Caco-2 (cell line): ENCODE measurements at regions of chr10 and their contacts with region 1.

Region 1: GRCh38 chr10:114703377-114704107 is 45.5 kb upstream of the ABLIM1 start:
- DNase-seq: peak in 1 of 2 experiments; percentile 40
- H3K4me3 ChIP-seq: no peak overlapping the region
- H3K4me3 Mint-ChIP-seq: no peak overlapping the region
- H3K27ac Mint-ChIP-seq: no peak overlapping the region
- H3K4me1 ChIP-seq: no peaks in the 10 kb centered on the region
- H3K4me1 Mint-ChIP-seq: no peaks in the 10 kb centered on the region
- H3K27me3 ChIP-seq: no peaks in the 10 kb centered on the region
- H3K27me3 Mint-ChIP-seq: no peaks in the 10 kb centered on the region
- CTCF ChIP-seq: peak; percentile 73 to 83

Region 2: DNA sequence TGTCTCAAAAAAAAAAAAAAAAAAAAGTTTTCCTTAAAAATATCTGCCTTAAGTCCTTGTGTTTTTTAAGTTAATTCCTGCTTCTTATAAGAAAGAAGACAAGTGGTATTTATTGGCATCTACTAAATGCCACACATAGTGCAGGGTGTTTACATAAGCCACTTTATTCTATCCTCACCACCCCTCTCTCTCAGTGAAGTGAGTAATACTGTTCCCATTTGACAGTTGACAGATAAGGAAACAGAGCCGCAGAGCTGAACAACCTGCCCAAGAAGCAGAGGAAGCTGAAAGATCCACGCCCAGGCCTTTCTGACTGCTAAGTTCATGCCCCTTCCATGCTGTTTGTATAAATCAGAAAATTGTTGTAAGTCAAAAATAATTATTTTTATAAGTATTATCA is 99.6 kb before region 1 on chr10:
- CTCF ChIA-PET with region 1: no interaction called
- POLR2A ChIA-PET with region 1: no interaction called
- intact Hi-C with region 1: no loop called
- DNase-seq: no peak
- H3K4me3 ChIP-seq: no peak overlapping the region
- H3K4me3 Mint-ChIP-seq: no peak overlapping the region
- H3K27ac Mint-ChIP-seq: peak overlapping the region; percentile 39
- H3K4me1 ChIP-seq: peaks cover 43% of the 10 kb centered on the region
- H3K4me1 Mint-ChIP-seq: peaks cover 37% of the 10 kb centered on the region
- H3K27me3 ChIP-seq: no peaks in the 10 kb centered on the region
- H3K27me3 Mint-ChIP-seq: no peaks in the 10 kb centered on the region
- CTCF ChIP-seq: no peak

Region 3: GRCh38 chr10:114783686-114784085 is 80.1 kb after region 1 on chr10:
- CTCF ChIA-PET with region 1: interaction called, 4 read pairs
- POLR2A ChIA-PET with region 1: no interaction called
- intact Hi-C with region 1: loop called (anchors 1 kb)
- DNase-seq: no peak
- H3K4me3 ChIP-seq: no peak overlapping the region
- H3K4me3 Mint-ChIP-seq: no peak overlapping the region
- H3K27ac Mint-ChIP-seq: no peak overlapping the region
- H3K4me1 ChIP-seq: no peaks in the 10 kb centered on the region
- H3K4me1 Mint-ChIP-seq: no peaks in the 10 kb centered on the region
- H3K27me3 ChIP-seq: no peaks in the 10 kb centered on the region
- H3K27me3 Mint-ChIP-seq: peaks cover 2% of the 10 kb centered on the region
- CTCF ChIP-seq: no peak

Region 4: DNA sequence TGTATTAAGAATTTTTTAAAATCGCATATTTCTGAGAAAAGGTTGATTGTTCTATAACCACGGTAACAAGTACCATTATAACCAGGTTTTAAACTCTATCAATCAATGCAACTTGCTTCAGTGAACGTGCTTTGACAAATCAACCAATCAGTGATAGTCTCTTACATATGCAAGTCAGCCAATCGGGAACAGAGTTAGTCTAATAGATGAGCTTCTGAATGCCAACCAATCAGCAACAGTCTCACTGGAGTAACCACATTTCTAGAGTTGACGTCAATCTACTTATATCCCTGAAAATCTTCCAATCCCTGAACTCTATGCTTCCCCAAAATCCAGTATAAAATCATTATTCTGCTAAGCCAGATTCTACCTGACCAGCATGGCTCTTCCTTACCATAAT is 189.7 kb after region 1 on chr10:
- CTCF ChIA-PET with region 1: no interaction called
- POLR2A ChIA-PET with region 1: no interaction called
- intact Hi-C with region 1: no loop called
- DNase-seq: no peak
- H3K4me3 ChIP-seq: no peak overlapping the region
- H3K4me3 Mint-ChIP-seq: peak overlapping the region; percentile 12
- H3K27ac Mint-ChIP-seq: no peak overlapping the region
- H3K4me1 ChIP-seq: no peaks in the 10 kb centered on the region
- H3K4me1 Mint-ChIP-seq: no peaks in the 10 kb centered on the region
- H3K27me3 ChIP-seq: no peaks in the 10 kb centered on the region
- H3K27me3 Mint-ChIP-seq: peaks cover under 1% of the 10 kb centered on the region
- CTCF ChIP-seq: no peak